SK-N-SH (cell line): ENCODE measurements at regions of chr7 and their contacts with region 1.

Region 1: GRCh38 chr7:152158801-152159587 is 133.5 kb downstream of the GALNT11 start:
- DNase-seq: no peak
- H3K4me3 ChIP-seq: no peak overlapping the region
- H3K27ac ChIP-seq: no peak overlapping the region
- H3K4me1 ChIP-seq: peaks cover 0 to 2% of the 10 kb centered on the region in 2 experiments; a peak in 1 of 4 replicates
- H3K27me3 ChIP-seq: no peaks in the 10 kb centered on the region
- CTCF ChIP-seq: no peak
- EP300 ChIP-seq: no peak
- RAD21 ChIP-seq: no peak

Region 2: DNA sequence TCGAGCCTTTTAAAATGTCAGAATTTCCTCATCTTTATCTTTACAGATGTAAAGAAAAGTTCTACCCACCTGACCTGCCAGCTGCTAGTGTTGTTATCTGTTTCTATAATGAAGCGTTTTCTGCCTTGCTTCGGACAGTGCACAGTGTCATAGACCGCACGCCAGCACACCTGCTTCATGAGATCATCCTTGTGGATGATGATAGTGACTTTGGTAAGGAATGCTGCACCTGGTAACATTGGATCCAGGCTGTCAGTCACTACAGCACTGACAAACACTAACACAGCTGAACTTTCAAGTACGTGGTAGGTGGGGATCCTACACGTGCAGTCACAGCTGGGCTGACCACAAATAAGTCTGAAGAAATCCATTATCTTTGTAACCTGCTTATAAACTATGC is 55.9 kb before region 1 on chr7:
- CTCF ChIA-PET with region 1: no interaction called
- POLR2A ChIA-PET with region 1: no interaction called
- DNase-seq: no peak
- H3K4me3 ChIP-seq: no peak overlapping the region
- H3K27ac ChIP-seq: no peak overlapping the region
- H3K4me1 ChIP-seq: no peaks in the 10 kb centered on the region; a peak in 1 of 4 replicates
- H3K27me3 ChIP-seq: no peaks in the 10 kb centered on the region
- CTCF ChIP-seq: no peak
- EP300 ChIP-seq: no peak
- RAD21 ChIP-seq: no peak

Region 3: DNA sequence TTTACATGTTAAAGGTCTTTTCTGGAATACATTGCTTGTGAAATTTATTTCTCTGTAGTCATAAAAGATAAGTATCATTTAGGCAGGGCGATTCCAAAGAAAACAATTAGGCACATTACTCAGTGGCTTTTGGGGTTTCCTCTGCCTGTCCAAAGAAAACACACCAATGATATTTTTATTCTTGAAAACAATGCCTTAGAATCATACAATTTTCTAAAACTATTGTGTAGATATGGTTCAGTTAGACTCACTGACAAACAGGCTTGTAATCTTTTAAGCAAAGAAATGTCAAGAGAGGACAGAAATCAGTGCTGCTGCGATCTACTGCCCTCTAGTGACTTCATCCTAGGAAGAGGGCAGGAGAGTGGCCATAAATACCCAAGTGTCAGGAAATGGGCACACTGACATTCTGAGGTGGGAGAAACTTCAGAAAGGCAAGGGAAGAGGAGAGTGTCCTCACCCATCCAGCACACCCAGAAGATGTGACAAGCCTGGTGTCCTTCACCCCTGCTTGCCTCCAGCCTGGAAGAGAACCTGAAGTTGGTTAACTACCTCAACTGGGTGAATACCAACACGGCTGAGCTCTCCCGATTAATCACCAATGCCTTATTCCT is 13.0 kb before region 1 on chr7:
- CTCF ChIA-PET with region 1: interaction called, 35 read pairs
- POLR2A ChIA-PET with region 1: no interaction called
- DNase-seq: peak; percentile 62
- H3K4me3 ChIP-seq: no peak overlapping the region; a peak in 1 of 4 replicates
- H3K27ac ChIP-seq: peak overlapping the region; percentile 9 to 63; a peak in 3 of 4 replicates
- H3K4me1 ChIP-seq: peaks cover 15 to 25% of the 10 kb centered on the region in 2 experiments
- H3K27me3 ChIP-seq: no peaks in the 10 kb centered on the region
- CTCF ChIP-seq: peak; percentile 96
- EP300 ChIP-seq: peak in 1 of 2 experiments; percentile 69; a peak in 1 of 4 replicates
- RAD21 ChIP-seq: peak; percentile 76